ENCODE measurements at regions of chr5 and their contacts with region 1.

Region 1: DNA sequence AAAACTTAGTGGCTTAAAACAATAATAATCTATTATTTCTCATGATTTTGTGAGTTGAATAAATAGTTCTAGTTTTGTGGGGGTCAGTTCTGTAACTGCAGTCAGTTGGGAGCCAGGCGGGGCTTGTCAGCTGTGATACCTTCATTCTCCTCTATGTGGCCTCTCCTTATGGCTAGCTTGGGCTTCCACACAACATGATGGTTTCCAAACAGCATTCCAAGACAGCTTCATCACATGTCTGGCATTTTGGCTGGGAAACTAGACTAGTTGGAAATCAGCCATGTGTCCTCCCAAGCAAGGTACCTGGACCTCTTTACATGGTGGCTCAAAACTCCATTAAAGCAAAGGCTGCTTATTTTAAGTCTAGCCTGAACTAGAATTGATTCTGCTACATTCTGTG is 61.4 kb upstream of the RANBP3L start:
- DNase-seq: no peak
- H3K4me3 ChIP-seq: no peak overlapping the region
- H3K27ac ChIP-seq: no peak overlapping the region
- H3K27me3 ChIP-seq: no peaks in the 10 kb centered on the region
- CTCF ChIP-seq: no peak

Region 2: GRCh38 chr5:36459176-36460135 is 96.4 kb after region 1 on chr5:
- CTCF ChIA-PET with region 1: interaction called, 11 read pairs
- POLR2A ChIA-PET with region 1: no interaction called
- DNase-seq: no peak
- H3K4me3 ChIP-seq: no peak overlapping the region
- H3K27ac ChIP-seq: no peak overlapping the region
- H3K27me3 ChIP-seq: no peaks in the 10 kb centered on the region
- CTCF ChIP-seq: peak; percentile 20; the same call in 1 of the 2 replicates

Measured in AG04450 (cell line).